Mammary epithelial cell (primary cell): ENCODE measurements at regions of chr20 and their contacts with region 1.

Region 1: GRCh38 chr20:25584905-25585704 is at the start of gene NINL:
- DNase-seq: peak; percentile 41
- H3K4me3 ChIP-seq: peak within 1 kb of the TSS; percentile 63 to 70 (median 65)
- H3K27ac ChIP-seq: no peak within 1 kb of the TSS
- H3K4me1 ChIP-seq: no peaks in the 10 kb centered on the region
- H3K27me3 ChIP-seq: no peaks in the 10 kb centered on the region
- CTCF ChIP-seq: no peak
- total RNA-seq, gene NINL: 6.8 to 7.7 TPM

Region 2: GRCh38 chr20:25623736-25624499 is 38.8 kb after region 1 on chr20 and contains the start of gene NANP:
- CTCF ChIA-PET with region 1: no interaction called
- dilution Hi-C with region 1: no loop called
- in situ Hi-C with region 1: no loop called
- intact Hi-C with region 1: loop called (anchors 1 kb)
- DNase-seq: peak; percentile 98
- H3K4me3 ChIP-seq: peak within 1 kb of the TSS; percentile 53 to 94 (median 87)
- H3K27ac ChIP-seq: peak within 1 kb of the TSS; percentile 83
- H3K4me1 ChIP-seq: peaks cover 18% of the 10 kb centered on the region
- H3K27me3 ChIP-seq: no peaks in the 10 kb centered on the region
- CTCF ChIP-seq: peak in 1 of 2 donors; percentile 25
- total RNA-seq, gene NANP: 7.5 TPM

Region 3: GRCh38 chr20:25750765-25751696 is 165.9 kb after region 1 on chr20:
- CTCF ChIA-PET with region 1: no interaction called
- dilution Hi-C with region 1: no loop called
- in situ Hi-C with region 1: no loop called
- intact Hi-C with region 1: loop called (anchors 5 kb)
- DNase-seq: peak; percentile 63
- H3K4me3 ChIP-seq: peak overlapping the region; percentile 32 to 48 (median 46)
- H3K27ac ChIP-seq: no peak overlapping the region
- H3K4me1 ChIP-seq: peaks cover 3% of the 10 kb centered on the region
- H3K27me3 ChIP-seq: no peaks in the 10 kb centered on the region
- CTCF ChIP-seq: no peak